ENCODE measurements at regions of chr10 and their contacts with region 1.

Region 1: DNA sequence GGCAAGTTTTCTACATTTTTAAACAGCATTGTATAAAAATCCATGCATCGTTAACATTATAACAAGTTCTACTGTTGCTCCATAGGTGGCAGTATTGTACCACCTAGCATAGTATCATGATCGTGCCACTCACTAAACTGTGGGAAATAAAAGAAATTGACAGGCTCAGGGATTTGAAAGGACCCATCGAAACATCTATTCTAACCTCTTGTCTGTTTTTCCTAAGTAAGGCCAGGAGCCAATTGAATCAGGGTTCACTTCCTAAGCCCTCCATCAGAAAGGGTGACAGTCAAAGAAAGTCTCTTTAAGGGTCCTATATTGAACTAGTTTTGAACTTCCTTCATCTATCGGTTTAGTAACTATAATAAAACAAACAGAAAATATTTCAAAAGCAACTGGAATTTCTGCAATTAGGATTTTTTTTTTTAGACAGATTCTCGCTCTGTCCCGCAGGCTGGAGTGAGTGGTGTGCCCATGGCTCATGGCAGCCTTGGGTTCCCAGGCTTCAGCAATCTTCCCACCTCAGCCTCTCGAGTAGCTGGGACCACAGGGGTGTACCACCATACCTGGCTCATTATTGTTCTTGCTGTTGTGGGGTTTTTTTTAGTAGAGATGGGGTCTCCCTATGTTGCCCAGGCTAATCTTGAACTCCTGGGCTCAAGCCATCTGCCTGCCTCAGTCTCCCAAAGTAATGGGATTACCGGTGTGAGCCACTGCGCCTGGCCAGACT is 9.4 kb downstream of the HACD1 start:
- DNase-seq: peak; percentile 23
- H3K4me3 Mint-ChIP-seq: no peak overlapping the region
- H3K27ac Mint-ChIP-seq: no peak overlapping the region
- H3K4me1 Mint-ChIP-seq: no peaks in the 10 kb centered on the region
- H3K27me3 Mint-ChIP-seq: no peaks in the 10 kb centered on the region

Region 2: GRCh38 chr10:17409170-17409733 is 198.5 kb before region 1 on chr10:
- CTCF ChIA-PET with region 1: interaction called, 3 read pairs
- intact Hi-C with region 1: loop called (anchors 2 kb)
- DNase-seq: no peak
- H3K4me3 Mint-ChIP-seq: no peak overlapping the region
- H3K27ac Mint-ChIP-seq: no peak overlapping the region
- H3K4me1 Mint-ChIP-seq: peaks cover 22% of the 10 kb centered on the region
- H3K27me3 Mint-ChIP-seq: no peaks in the 10 kb centered on the region

Region 3: DNA sequence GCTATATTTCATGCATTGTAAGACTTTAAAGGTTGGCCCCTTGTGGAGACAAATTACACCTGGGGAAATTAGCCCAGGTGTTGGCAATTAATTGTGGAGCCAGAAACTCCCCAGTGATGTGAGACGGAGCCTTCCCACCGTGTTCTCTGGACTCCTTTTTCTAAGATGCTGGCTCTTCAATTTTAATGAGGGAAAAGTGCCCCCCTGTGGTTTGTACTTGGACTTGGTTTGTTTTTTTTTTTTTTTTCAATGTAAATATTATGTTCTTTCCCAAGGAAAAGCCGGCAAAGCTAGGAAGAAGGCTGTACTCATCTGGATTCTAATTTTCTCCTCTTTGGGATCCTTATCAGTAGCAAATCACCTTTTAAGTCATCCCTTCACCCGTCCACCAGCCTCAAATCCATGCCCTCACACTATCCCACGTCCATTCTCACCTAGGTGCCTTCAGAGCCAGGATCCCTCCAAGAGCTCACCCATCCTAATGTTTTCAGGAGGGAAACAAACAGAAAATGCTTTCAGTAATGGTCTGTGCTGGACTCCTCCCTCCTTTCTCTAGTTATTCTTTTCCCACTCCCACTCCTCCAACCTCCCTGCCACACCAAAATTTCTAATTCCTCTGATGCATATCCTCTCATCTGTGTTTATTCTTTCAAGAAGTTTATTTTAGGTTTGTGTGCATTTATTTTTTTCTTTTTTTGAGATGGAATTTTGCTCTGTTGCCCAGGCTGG is 133.0 kb before region 1 on chr10:
- CTCF ChIA-PET with region 1: no interaction called
- intact Hi-C with region 1: no loop called
- DNase-seq: no peak
- H3K4me3 Mint-ChIP-seq: no peak overlapping the region
- H3K27ac Mint-ChIP-seq: no peak overlapping the region
- H3K4me1 Mint-ChIP-seq: peaks cover 5% of the 10 kb centered on the region
- H3K27me3 Mint-ChIP-seq: peaks cover 7% of the 10 kb centered on the region

Region 4: DNA sequence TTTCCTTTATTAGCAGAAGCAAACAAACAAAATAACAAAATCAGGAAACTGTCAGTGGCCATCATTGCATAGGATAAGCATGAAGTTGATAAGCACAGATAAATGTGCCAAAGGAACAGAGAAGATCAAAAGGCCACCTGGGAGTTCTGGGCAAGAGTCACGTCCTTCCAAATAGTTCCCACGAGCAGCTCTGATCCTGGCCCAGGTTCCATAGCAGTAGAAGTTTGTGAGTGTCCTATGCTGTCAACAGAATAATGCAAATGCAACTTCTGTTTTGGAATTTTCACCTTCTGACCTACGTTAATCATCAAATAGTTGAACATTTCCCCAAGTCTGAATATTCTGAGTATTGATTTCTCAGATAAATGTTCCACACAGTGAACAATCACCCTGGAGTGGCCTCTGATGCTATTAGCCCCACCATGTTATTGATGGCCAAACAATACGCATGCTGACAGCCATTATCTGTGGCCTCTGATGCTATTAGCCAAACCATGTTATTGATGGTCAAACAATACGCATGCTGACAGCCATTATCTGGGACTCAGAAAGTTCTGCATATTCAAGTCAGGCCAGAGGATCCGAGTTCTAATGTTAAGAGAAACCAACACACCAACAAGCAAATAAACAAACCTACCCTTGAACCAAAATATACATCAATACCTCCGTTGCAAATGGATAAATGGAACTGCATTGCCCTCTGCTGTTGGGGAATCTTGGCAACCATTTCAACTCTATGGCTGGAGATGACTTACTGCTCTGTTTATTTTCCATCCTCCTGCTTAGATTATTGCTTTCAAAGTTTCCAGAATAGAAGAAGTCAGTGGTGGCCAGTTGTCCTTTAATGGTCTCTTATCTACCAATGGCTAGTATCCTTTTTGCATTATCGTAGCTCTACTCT is 264.7 kb after region 1 on chr10:
- CTCF ChIA-PET with region 1: interaction called, 4 read pairs
- intact Hi-C with region 1: loop called (anchors 1 kb)
- DNase-seq: peak; percentile 8
- H3K4me3 Mint-ChIP-seq: no peak overlapping the region
- H3K27ac Mint-ChIP-seq: no peak overlapping the region
- H3K4me1 Mint-ChIP-seq: no peaks in the 10 kb centered on the region
- H3K27me3 Mint-ChIP-seq: no peaks in the 10 kb centered on the region

Region 5: DNA sequence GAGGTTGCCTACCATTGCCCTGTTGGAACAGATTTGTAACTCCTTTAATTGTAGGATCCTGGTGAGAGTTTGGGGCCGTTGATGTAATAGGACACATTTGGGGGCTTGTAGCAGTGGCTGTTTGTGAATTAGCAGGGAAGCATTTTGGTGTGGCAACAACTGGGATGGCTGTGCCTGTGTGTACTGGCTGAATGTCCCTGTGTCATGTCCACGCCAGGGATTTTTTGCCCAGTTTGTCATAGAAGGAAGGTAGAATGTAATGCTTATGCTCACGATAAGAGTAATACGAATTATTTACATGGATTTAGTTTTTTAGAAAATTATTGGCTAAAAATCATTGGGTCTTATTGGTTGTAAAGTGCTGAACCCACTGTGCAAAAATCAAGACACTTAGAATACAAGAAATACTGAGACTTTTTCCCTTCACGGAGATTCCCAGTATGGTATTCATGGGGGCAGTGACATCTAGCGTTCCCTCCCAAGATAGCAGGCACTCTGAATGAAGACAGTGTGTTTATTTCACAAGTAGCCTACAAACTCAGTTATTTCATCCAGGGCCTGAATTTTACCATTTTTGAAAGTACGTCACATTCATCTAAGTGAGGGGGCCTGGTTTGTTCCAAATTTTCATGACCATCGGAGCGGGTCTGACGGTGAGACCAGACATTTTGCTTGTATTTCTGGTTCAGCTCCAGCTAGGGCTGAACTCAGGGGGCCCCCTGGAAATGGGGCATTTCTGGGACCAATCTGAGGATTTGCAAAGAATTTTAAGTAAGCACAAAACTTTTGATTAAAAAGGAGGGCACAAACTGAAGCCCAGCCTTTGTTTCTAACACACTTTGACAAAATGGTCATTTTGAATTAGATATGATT is 607.2 kb after region 1 on chr10:
- CTCF ChIA-PET with region 1: interaction called, 3 read pairs
- intact Hi-C with region 1: loop called (anchors 2 kb)
- DNase-seq: peak; percentile 48
- H3K4me3 Mint-ChIP-seq: no peak overlapping the region
- H3K27ac Mint-ChIP-seq: no peak overlapping the region
- H3K4me1 Mint-ChIP-seq: no peaks in the 10 kb centered on the region
- H3K27me3 Mint-ChIP-seq: peaks cover 2% of the 10 kb centered on the region

Region 6: DNA sequence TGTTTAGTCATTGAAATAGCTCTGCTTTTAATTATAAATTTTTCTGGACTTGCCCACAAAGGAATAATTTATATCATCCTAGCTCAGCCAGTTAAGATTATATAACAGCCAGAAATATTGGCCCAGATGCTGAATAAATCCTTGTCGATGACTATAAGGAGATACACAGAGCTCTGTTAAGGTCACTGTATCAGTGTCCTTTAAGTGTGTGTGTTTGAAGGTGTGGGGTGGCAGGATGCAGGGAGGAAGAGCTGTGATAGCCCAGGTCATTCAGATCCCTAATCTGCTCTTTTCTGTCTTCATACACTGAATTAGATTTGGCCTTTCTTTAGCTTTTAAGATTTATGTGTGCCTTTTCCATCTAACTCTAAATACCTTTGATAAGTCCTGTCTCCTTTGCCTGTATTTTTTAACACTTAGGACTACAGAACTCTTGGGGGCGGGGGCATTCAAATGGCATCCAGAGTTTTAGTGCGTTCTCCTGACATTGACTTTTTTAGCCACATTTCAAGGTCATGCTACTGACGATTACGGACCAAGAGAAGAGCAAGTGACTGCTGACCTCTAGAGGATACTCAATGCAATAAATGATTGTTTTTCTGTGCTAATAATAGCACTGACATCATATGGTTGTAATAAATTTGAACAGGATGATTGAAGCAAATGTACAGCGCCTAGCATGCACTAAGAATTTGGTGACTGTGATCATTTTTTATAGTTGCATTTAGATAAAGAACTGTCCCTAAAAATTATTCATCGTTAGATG is 704.8 kb after region 1 on chr10:
- CTCF ChIA-PET with region 1: no interaction called
- intact Hi-C with region 1: loop called (anchors 10 kb)
- DNase-seq: no peak
- H3K4me3 Mint-ChIP-seq: no peak overlapping the region
- H3K27ac Mint-ChIP-seq: no peak overlapping the region
- H3K4me1 Mint-ChIP-seq: no peaks in the 10 kb centered on the region
- H3K27me3 Mint-ChIP-seq: peaks cover 2% of the 10 kb centered on the region